ENCODE measurements at regions of chr4 and their contacts with region 1.

Region 1: DNA sequence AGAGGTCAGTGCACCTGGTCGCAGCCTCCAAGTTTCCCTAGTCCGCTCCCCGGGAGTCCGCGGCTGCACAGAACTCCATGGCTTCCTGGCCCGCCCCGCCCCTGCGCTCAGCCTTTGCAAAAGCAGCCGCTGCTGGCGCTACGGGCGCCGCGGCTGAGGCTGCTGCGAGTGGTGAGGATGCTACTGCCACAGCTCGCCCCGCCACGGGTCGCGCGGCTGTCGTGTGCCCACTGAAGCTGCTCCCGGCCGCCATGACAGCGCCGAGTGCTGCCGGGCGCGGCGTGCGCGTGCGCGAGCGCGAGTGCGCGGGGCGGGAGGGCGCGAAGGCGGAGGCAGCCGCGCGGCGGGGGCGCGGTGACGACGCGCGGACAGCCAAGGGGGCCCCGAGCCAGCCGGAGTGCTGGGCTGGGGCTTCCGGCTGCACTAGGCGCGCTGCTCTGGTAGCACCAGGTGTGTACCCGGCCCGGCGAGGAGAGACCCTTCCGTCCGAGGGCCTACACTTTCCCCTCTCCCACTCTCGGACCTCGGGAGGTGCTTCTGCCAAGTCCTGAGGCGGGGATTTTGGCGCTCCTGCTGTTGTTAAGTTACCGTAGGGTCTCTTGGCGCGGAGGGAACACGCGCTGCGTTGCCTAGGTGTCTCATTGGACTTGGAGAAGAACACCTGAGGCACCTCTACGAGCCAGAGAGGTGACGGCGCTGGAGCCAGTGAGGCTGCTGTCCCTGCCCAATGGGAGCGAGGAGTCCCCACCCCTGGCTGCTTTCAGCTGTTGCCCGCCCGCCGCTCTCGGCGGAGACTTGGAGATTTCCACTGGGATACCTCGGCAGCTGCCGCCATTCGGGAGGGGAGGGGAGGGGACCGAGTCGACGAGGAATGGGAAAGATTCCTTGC is 619 bp upstream of the LRBA start:
- DNase-seq: peak; percentile 84
- ATAC-seq: peak; percentile 80
- H3K4me3 Mint-ChIP-seq: peak overlapping the region; percentile 100
- H3K27ac Mint-ChIP-seq: peak overlapping the region; percentile 99
- H3K4me1 Mint-ChIP-seq: peaks cover 32% of the 10 kb centered on the region
- H3K27me3 Mint-ChIP-seq: no peaks in the 10 kb centered on the region
- CTCF ChIP-seq: no peak

Region 2: DNA sequence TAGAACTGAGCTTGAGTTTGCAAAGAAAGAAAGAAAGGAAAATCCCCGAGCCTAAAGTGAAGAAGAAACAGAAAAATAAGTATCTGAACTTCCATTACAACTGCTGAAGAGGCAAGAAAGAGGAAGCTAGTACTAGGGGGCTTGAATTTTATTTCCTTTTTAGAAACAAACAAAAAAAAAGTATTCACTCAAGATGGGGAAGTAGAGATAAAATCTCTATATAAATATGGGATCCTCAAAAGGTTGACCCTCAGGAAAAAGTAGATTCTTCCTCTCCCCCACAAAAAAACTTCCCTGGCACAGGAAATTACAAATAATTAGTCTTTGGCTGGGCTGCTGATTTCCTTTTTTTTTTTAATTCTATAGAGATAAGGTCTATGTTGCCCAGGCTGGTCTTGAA is 16.6 kb before region 1 on chr4:
- CTCF ChIA-PET with region 1: no interaction called
- POLR2A ChIA-PET with region 1: interaction called, 7 read pairs
- intact Hi-C with region 1: loop called (anchors 1 kb)
- DNase-seq: no peak
- ATAC-seq: no peak
- H3K4me3 Mint-ChIP-seq: peak overlapping the region; percentile 1
- H3K27ac Mint-ChIP-seq: peak overlapping the region; percentile 25
- H3K4me1 Mint-ChIP-seq: peaks cover 59% of the 10 kb centered on the region
- H3K27me3 Mint-ChIP-seq: no peaks in the 10 kb centered on the region
- CTCF ChIP-seq: no peak

Region 3: GRCh38 chr4:151099229-151099975 is 83.7 kb after region 1 on chr4 and contains the start of gene RPS3A:
- CTCF ChIA-PET with region 1: interaction called, 3 read pairs
- POLR2A ChIA-PET with region 1: interaction called, 45 read pairs
- intact Hi-C with region 1: loop called (anchors 1 kb)
- DNase-seq: peak; percentile 99
- ATAC-seq: peak; percentile 94
- H3K4me3 Mint-ChIP-seq: peak within 1 kb of the TSS; percentile 99
- H3K27ac Mint-ChIP-seq: peak within 1 kb of the TSS; percentile 98
- H3K4me1 Mint-ChIP-seq: peaks cover 40% of the 10 kb centered on the region
- H3K27me3 Mint-ChIP-seq: peaks cover 4% of the 10 kb centered on the region
- CTCF ChIP-seq: peak; percentile 88
- total RNA-seq, gene RPS3A: 3,089 and 3,656 TPM in 2 replicates

Region 4: DNA sequence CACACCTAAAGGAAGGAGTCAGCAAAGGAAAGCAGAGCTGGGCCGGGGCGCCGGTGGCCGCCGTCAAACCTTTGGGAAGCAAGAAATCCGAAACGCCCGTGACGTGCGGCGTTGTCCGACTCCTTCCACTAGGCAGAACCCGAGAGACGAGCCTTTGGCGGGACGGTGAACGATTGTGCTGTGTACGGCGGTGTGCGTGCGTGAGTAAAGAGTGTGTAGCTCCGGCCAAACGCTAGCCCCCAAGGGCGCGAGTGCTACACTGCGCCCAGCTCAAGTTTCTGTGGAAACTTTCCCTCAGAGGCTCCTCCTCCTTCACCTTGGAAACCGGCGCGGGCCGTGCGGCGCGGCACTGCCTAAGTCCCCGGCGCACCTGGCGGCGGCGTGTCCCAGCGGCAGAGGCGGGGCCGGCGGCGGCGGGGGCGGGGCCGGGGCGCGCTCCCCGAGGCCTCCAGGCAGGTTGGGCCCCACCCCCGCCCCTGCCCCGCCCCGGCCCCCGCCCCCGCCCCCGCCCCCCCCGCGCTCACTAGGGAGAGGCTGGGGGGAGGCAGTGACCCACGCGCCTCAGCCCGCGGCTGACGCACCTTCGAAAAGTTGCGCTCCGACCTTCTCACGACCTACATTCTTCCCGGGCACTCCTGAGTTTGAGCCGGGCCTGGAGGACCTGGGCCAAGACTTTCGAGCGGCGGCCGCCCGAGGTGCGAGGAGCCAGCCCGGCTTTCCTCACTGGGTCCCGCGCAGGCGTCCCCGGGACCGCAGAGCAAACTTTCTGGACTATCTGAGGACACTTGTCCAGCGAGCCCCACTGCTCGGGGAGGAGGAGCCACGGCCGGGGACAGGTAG is 393.1 kb after region 1 on chr4 and contains the start of gene FHIP1A:
- CTCF ChIA-PET with region 1: no interaction called
- POLR2A ChIA-PET with region 1: no interaction called
- intact Hi-C with region 1: loop called (anchors 5 kb)
- DNase-seq: peak; percentile 63
- ATAC-seq: peak; percentile 88
- H3K4me3 Mint-ChIP-seq: peak within 1 kb of the TSS; percentile 86
- H3K27ac Mint-ChIP-seq: peak within 1 kb of the TSS; percentile 35
- H3K4me1 Mint-ChIP-seq: peaks cover 24% of the 10 kb centered on the region
- H3K27me3 Mint-ChIP-seq: peaks cover 34% of the 10 kb centered on the region
- CTCF ChIP-seq: no peak
- total RNA-seq, gene FHIP1A: 0.04 and 0.07 TPM in 2 replicates

Region 5: GRCh38 chr4:151760712-151761527 is 745.2 kb after region 1 on chr4 and contains the start of gene GATB:
- CTCF ChIA-PET with region 1: no interaction called
- POLR2A ChIA-PET with region 1: no interaction called
- intact Hi-C with region 1: loop called (anchors 1 kb)
- DNase-seq: peak; percentile 76
- ATAC-seq: peak; percentile 98
- H3K4me3 Mint-ChIP-seq: peak within 1 kb of the TSS; percentile 100
- H3K27ac Mint-ChIP-seq: peak within 1 kb of the TSS; percentile 98
- H3K4me1 Mint-ChIP-seq: peaks cover 13% of the 10 kb centered on the region
- H3K27me3 Mint-ChIP-seq: peaks cover 6% of the 10 kb centered on the region
- CTCF ChIP-seq: no peak
- total RNA-seq, gene GATB: 22.1 and 22.9 TPM in 2 replicates

Region 6: GRCh38 chr4:152807294-152807829 is 1791.7 kb after region 1 on chr4:
- CTCF ChIA-PET with region 1: no interaction called
- POLR2A ChIA-PET with region 1: no interaction called
- intact Hi-C with region 1: no loop called
- DNase-seq: no peak
- ATAC-seq: peak; percentile 60
- H3K4me3 Mint-ChIP-seq: peak overlapping the region; percentile 8
- H3K27ac Mint-ChIP-seq: no peak overlapping the region
- H3K4me1 Mint-ChIP-seq: peaks cover 34% of the 10 kb centered on the region
- H3K27me3 Mint-ChIP-seq: no peaks in the 10 kb centered on the region
- CTCF ChIP-seq: no peak